ENCODE measurements at regions of chr17 and their contacts with region 1.

Region 1: DNA sequence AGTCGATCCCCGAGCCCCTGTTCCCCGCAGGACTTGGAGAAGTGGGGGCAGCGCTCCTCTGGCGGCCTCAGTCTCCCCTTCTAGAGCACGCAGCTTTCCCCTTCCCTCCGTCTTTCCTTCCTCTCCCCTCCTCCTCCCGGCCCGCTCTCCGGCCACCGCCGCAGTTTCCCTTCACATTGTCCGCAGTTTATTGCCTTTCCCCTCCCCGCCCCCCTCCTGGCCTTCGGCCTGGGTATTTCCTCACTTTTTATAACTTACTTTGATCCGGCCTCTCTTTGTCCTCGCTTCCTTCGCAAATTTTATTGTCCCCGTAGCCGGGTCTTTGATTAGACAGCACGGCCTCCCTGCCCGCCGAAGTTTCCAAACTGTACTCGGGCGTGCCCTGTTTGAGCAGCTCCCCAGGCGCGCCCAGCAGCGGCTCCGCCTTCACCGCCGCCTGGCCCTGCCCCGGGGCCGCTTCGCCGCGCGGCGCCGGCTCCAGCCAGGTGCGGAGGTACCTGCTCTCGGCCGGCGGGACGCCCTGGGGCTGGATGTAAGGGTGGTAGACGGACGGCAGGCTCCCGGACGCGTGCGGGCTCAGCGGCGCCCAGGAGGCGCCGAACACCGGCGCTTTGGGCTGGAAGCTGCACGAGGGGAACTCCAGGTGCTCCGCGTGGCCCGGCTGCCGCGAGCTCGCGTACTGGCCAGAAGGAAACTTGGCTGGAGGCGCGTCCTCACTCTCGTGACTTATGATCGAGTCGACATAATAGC is 488 bp downstream of the HOXB9 start:
- DNase-seq: peak; percentile 90 to 92
- H3K4me3 ChIP-seq: peak overlapping the region; percentile 57
- H3K4me3 Mint-ChIP-seq: peak overlapping the region; percentile 85
- H3K27ac Mint-ChIP-seq: peak overlapping the region; percentile 33
- H3K4me1 ChIP-seq: peaks cover 13% of the 10 kb centered on the region
- H3K4me1 Mint-ChIP-seq: peaks cover 8% of the 10 kb centered on the region
- H3K27me3 ChIP-seq: peaks cover 30% of the 10 kb centered on the region
- H3K27me3 Mint-ChIP-seq: peaks cover 56% of the 10 kb centered on the region
- CTCF ChIP-seq: peak in 1 of 2 experiments; percentile 0

Region 2: DNA sequence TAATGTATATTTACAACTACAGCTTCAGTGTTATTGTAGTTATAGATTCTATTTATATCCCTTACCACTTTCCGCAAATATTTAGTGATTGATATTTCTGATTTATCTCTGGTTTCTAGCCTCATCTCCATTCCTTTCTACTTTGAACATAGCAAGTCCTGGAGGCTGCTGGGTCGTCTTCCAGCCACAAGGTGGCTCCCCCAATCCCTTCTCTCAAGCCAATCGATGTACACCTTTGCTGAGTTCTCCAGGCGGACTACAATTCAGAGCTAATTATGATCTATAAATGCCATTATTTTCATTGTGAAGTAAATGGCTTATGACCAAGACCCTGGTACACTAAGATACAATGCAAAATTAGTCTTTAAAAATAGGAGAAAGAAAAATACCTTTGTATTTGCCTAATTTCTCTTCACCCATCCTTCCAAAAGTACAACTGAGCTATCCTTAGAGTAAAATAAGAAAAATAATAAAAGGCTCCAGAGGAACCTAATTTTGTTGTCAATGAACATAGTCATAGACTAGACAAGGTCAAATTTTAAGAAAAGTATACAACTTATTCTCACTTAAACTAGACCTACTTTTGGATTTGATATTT is 317.8 kb before region 1 on chr17:
- CTCF ChIA-PET with region 1: interaction called, 10 read pairs
- POLR2A ChIA-PET with region 1: no interaction called
- intact Hi-C with region 1: no loop called
- DNase-seq: peak; percentile 83
- H3K4me3 ChIP-seq: no peak overlapping the region
- H3K4me3 Mint-ChIP-seq: no peak overlapping the region
- H3K27ac Mint-ChIP-seq: no peak overlapping the region
- H3K4me1 ChIP-seq: peaks cover 15% of the 10 kb centered on the region
- H3K4me1 Mint-ChIP-seq: peaks cover 14% of the 10 kb centered on the region
- H3K27me3 ChIP-seq: no peaks in the 10 kb centered on the region
- H3K27me3 Mint-ChIP-seq: peaks cover 16% of the 10 kb centered on the region
- CTCF ChIP-seq: peak; percentile 99 to 100

Region 3: DNA sequence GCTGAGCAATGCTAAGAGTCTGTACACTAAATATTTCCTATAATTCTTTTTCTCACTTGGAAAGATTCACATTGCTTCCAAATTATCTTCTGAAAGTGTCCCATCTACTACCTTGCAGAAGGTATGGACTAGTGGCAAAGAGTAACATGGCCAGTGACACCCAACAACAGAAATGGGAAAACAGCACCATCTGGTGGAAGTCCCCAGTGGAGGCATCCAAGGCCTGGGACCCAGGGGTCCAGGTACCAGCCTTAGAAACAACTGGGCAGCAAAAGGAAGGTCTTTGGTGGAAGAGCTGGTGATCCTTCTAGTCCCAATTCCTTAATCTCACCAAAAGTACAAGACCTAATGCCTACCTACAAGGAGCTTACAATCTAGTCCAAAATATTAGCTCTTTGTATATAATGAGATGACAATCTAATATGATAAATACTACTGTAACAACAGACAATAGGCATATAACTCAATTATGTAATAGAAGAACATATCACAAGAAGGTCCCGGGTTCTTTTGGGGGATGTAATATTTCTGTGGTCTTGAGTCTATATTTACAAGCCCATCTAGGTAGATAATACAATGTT is 250.9 kb before region 1 on chr17:
- CTCF ChIA-PET with region 1: no interaction called
- POLR2A ChIA-PET with region 1: no interaction called
- intact Hi-C with region 1: no loop called
- DNase-seq: peak; percentile 81 to 88
- H3K4me3 ChIP-seq: no peak overlapping the region
- H3K4me3 Mint-ChIP-seq: no peak overlapping the region
- H3K27ac Mint-ChIP-seq: no peak overlapping the region
- H3K4me1 ChIP-seq: no peaks in the 10 kb centered on the region
- H3K4me1 Mint-ChIP-seq: no peaks in the 10 kb centered on the region
- H3K27me3 ChIP-seq: no peaks in the 10 kb centered on the region; the same call in 1 of the 2 replicates
- H3K27me3 Mint-ChIP-seq: peaks cover 2% of the 10 kb centered on the region
- CTCF ChIP-seq: peak; percentile 98

Region 4: DNA sequence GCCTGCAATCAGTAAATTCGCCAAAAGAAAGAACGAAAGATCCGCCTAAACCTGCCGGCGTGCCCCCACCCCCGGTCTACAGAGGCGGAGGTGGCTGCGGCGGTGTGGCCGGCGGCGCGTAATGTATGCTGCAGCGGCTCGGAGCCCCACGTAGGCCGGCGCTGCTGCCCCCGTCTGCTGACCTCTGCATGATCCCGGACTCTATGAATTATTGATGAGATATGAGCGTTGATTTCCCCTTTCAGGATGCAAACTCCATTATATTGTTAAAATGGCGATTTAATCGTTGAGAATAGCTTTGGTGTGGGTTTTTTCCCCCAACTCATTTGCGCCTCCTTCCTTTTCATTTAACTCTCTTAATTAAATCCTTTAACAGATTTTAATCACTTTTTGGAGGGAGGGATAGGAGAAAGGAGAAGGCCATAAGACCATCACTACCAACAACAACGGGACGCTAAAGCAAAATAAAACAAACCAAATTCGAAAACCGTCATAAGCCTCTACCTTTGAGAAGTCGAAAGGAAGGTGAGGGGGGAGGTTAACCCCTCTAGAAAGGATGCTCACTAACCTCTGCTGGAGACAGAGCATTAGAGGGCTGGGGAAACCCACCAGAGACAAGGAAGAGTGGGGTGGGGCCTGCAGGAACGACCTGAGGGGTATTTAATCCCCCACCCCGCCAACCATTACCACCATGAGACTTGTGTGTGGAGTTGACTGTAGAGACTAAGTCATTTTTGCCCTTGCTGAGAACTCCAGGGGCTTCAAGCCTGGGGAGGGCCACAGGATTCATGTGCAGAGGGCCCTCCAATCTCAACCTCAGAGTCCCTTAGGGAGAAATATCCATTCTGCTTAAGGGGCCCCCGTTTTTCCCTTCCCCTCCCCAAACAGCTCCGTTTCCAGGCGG is 39.1 kb before region 1 on chr17:
- CTCF ChIA-PET with region 1: interaction called, 3 read pairs
- POLR2A ChIA-PET with region 1: interaction called, 17 read pairs
- intact Hi-C with region 1: no loop called
- DNase-seq: no peak
- H3K4me3 ChIP-seq: no peak overlapping the region
- H3K4me3 Mint-ChIP-seq: no peak overlapping the region
- H3K27ac Mint-ChIP-seq: no peak overlapping the region
- H3K4me1 ChIP-seq: peaks cover 21% of the 10 kb centered on the region
- H3K4me1 Mint-ChIP-seq: peaks cover 22% of the 10 kb centered on the region
- H3K27me3 ChIP-seq: peaks cover 12% of the 10 kb centered on the region
- H3K27me3 Mint-ChIP-seq: peaks cover 37% of the 10 kb centered on the region
- CTCF ChIP-seq: no peak

Region 5: GRCh38 chr17:48646183-48647102 is 20.8 kb after region 1 on chr17:
- CTCF ChIA-PET with region 1: no interaction called
- POLR2A ChIA-PET with region 1: interaction called, 4 read pairs
- intact Hi-C with region 1: loop called (anchors 2 kb)
- DNase-seq: peak; percentile 73 to 82
- H3K4me3 ChIP-seq: peak overlapping the region; percentile 30
- H3K4me3 Mint-ChIP-seq: peak overlapping the region; percentile 77
- H3K27ac Mint-ChIP-seq: no peak overlapping the region
- H3K4me1 ChIP-seq: peaks cover 9% of the 10 kb centered on the region; the same call in 1 of the 2 replicates
- H3K4me1 Mint-ChIP-seq: peaks cover 7% of the 10 kb centered on the region
- H3K27me3 ChIP-seq: no peaks in the 10 kb centered on the region
- H3K27me3 Mint-ChIP-seq: peaks cover 24% of the 10 kb centered on the region
- CTCF ChIP-seq: no peak

Region 6: DNA sequence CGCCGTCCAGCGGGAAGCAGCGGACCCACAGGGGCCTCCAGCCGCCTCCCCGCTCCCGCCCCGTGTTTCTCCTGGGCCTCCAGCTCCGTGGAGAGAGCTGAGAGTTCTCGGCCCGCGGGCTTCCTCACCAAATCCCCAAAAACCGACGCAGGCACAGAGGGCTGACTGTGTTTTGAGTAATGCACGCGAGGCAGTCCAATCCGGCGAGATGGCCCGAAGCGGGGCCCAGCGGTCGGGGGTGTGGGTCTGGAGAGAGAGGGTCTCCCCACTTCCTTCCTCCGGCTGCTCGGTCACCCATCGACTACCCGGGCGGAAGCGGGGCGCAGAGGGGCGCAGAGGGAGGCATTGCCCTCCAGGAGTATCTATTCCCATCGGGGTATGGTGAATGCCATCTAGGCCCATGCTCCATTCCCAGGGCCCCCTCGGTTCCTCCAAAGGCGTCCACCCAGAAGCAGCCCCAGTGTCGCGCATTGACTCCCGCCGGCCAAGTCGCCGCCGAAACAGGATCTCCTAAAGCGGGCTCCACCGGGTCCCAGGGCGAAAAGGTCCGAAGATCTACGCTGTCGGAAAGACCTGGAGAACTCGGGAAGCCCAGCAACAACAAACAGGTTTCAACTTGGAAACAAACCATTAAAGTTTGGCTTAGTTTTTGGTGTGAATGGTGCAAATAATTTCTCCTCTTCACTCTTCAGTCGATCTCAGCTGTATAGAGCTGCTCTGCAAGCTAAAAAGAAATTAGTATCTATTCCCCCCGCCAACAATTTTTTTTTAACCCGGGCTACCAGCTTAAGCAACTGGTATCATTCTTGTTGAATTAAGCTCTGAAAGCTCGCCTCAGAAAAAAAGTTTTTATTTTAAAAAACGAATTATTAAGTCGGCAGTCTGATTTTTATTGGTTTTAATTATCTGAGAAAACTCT is 122.0 kb after region 1 on chr17:
- CTCF ChIA-PET with region 1: no interaction called
- POLR2A ChIA-PET with region 1: interaction called, 10 read pairs
- intact Hi-C with region 1: no loop called
- DNase-seq: no peak
- H3K4me3 ChIP-seq: no peak overlapping the region
- H3K4me3 Mint-ChIP-seq: no peak overlapping the region
- H3K27ac Mint-ChIP-seq: no peak overlapping the region
- H3K4me1 ChIP-seq: peaks cover 9% of the 10 kb centered on the region
- H3K4me1 Mint-ChIP-seq: peaks cover 20% of the 10 kb centered on the region
- H3K27me3 ChIP-seq: peaks cover 1% of the 10 kb centered on the region; the same call in 1 of the 2 replicates
- H3K27me3 Mint-ChIP-seq: peaks cover 16% of the 10 kb centered on the region
- CTCF ChIP-seq: no peak